ENCODE measurements at regions of chr16 and their contacts with region 1.

Region 1: GRCh38 chr16:29745853-29746345 is at the start of gene C16orf54:
- DNase-seq: peak; percentile 98 to 99 (median 98)
- H3K4me3 ChIP-seq: peak within 1 kb of the TSS; percentile 67 to 93
- H3K4me3 Mint-ChIP-seq: peak within 1 kb of the TSS; percentile 96 to 100 (median 99)
- H3K27ac ChIP-seq: peak within 1 kb of the TSS; percentile 94
- H3K27ac Mint-ChIP-seq: peak within 1 kb of the TSS; percentile 98 to 100 (median 100)
- H3K4me1 ChIP-seq: peaks cover 78% of the 10 kb centered on the region
- H3K4me1 Mint-ChIP-seq: peaks cover 39 to 79% (median 54%) of the 10 kb centered on the region in 4 donors
- H3K27me3 ChIP-seq: no peaks in the 10 kb centered on the region
- H3K27me3 Mint-ChIP-seq: peaks cover 0 to 2% of the 10 kb centered on the region in 2 donors
- total RNA-seq, gene C16orf54: 139 to 143 TPM

Region 2: GRCh38 chr16:28846933-28847273 is 899.0 kb before region 1 on chr16:
- CTCF ChIA-PET with region 1: no interaction called
- POLR2A ChIA-PET with region 1: no interaction called
- intact Hi-C with region 1: no loop called
- DNase-seq: no peak
- H3K4me3 ChIP-seq: peak overlapping the region; percentile 86 to 93
- H3K4me3 Mint-ChIP-seq: peak overlapping the region; percentile 92 to 100 (median 94)
- H3K27ac ChIP-seq: peak overlapping the region; percentile 87
- H3K27ac Mint-ChIP-seq: peak overlapping the region; percentile 95 to 99 (median 97)
- H3K4me1 ChIP-seq: peaks cover 22% of the 10 kb centered on the region
- H3K4me1 Mint-ChIP-seq: peaks cover 18 to 35% (median 25%) of the 10 kb centered on the region in 4 donors
- H3K27me3 ChIP-seq: no peaks in the 10 kb centered on the region
- H3K27me3 Mint-ChIP-seq: no peaks in the 10 kb centered on the region

Region 3: GRCh38 chr16:29710227-29711219 is 35.4 kb before region 1 on chr16:
- CTCF ChIA-PET with region 1: interaction called, 3 read pairs
- POLR2A ChIA-PET with region 1: interaction called, 12 read pairs
- intact Hi-C with region 1: loop called (anchors 1 kb)
- DNase-seq: peak; percentile 64 to 73 (median 69)
- H3K4me3 ChIP-seq: no peak overlapping the region
- H3K4me3 Mint-ChIP-seq: peak overlapping the region in 1 of 8 donors; percentile 12
- H3K27ac ChIP-seq: no peak overlapping the region
- H3K27ac Mint-ChIP-seq: peak overlapping the region in 6 of 7 donors; percentile 8 to 95 (median 89)
- H3K4me1 ChIP-seq: peaks cover 10% of the 10 kb centered on the region
- H3K4me1 Mint-ChIP-seq: peaks cover 6 to 25% (median 12%) of the 10 kb centered on the region in 4 donors
- H3K27me3 ChIP-seq: no peaks in the 10 kb centered on the region
- H3K27me3 Mint-ChIP-seq: no peaks in the 10 kb centered on the region

Region 4: DNA sequence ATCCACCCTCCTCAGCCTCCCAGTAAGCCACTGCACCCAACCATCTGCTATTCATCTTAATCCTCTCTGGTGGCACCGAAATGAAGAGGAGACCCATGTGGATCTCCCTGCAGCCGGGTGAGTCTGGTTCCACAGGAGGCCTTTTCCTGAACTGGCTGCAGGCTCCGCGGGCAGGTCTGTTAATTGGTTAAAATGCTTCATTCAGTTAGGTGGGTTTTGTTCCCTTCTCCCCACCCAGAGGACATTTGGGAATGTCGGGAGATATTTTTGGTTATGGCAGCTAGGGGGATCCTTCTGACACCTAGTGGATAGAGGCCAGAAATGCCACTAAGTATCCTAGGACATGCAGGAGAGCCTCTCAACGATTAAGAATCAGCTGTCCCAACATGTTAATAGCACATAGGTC is 16.8 kb before region 1 on chr16:
- CTCF ChIA-PET with region 1: interaction called, 7 read pairs
- POLR2A ChIA-PET with region 1: interaction called, 91 read pairs
- intact Hi-C with region 1: no loop called
- DNase-seq: no peak
- H3K4me3 ChIP-seq: no peak overlapping the region
- H3K4me3 Mint-ChIP-seq: peak overlapping the region in 1 of 8 donors; percentile 20
- H3K27ac ChIP-seq: no peak overlapping the region
- H3K27ac Mint-ChIP-seq: peak overlapping the region in 3 of 7 donors; percentile 24 to 66 (median 36)
- H3K4me1 ChIP-seq: peaks cover 14% of the 10 kb centered on the region
- H3K4me1 Mint-ChIP-seq: peaks cover 17 to 32% (median 21%) of the 10 kb centered on the region in 4 donors
- H3K27me3 ChIP-seq: no peaks in the 10 kb centered on the region
- H3K27me3 Mint-ChIP-seq: no peaks in the 10 kb centered on the region

Region 5: DNA sequence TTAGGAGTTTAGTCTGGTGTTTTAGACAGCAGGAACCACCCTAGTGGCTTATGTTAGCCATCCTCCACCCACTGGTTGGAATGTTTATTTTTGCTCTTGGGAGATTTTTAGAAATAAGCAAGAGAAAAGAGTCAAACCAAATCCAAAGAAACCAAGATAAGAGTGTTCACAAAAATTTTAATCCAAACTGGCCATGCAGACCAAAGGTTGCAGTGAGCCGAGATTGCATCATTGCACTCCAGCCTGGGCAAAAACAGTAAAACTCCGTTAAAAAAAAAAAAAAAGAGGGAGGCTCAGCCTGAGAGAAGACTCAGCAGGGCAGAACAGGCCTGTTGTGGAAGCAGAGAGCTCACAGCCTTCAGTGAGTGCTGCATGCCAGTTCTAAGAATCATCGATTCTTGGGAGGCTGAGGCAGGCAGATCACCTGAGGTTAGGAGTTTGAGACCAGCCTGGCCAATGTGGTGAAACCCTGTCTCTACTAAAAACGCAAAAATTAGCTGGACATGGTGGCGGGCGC is 12.1 kb after region 1 on chr16:
- CTCF ChIA-PET with region 1: interaction called, 9 read pairs
- POLR2A ChIA-PET with region 1: interaction called, 41 read pairs
- intact Hi-C with region 1: no loop called
- DNase-seq: no peak
- H3K4me3 ChIP-seq: no peak overlapping the region
- H3K4me3 Mint-ChIP-seq: no peak overlapping the region
- H3K27ac ChIP-seq: no peak overlapping the region
- H3K27ac Mint-ChIP-seq: peak overlapping the region in 3 of 7 donors; percentile 6 to 75 (median 46)
- H3K4me1 ChIP-seq: peaks cover 23% of the 10 kb centered on the region
- H3K4me1 Mint-ChIP-seq: peaks cover 19 to 43% (median 27%) of the 10 kb centered on the region in 4 donors
- H3K27me3 ChIP-seq: no peaks in the 10 kb centered on the region
- H3K27me3 Mint-ChIP-seq: no peaks in the 10 kb centered on the region

Region 6: GRCh38 chr16:29815793-29816693 is 70.1 kb after region 1 on chr16 and contains the start of gene PAGR1:
- CTCF ChIA-PET with region 1: interaction called, 3 read pairs
- POLR2A ChIA-PET with region 1: interaction called, 64 read pairs
- intact Hi-C with region 1: loop called (anchors 2 kb)
- DNase-seq: peak; percentile 99 to 100 (median 99)
- H3K4me3 ChIP-seq: peak within 1 kb of the TSS; percentile 91 to 95
- H3K4me3 Mint-ChIP-seq: peak within 1 kb of the TSS; percentile 95 to 99 (median 98)
- H3K27ac ChIP-seq: peak within 1 kb of the TSS; percentile 77
- H3K27ac Mint-ChIP-seq: peak within 1 kb of the TSS; percentile 94 to 100 (median 98)
- H3K4me1 ChIP-seq: peaks cover 66% of the 10 kb centered on the region
- H3K4me1 Mint-ChIP-seq: peaks cover 30 to 87% (median 56%) of the 10 kb centered on the region in 4 donors
- H3K27me3 ChIP-seq: no peaks in the 10 kb centered on the region
- H3K27me3 Mint-ChIP-seq: peaks cover 0 to 2% of the 10 kb centered on the region in 2 donors
- total RNA-seq, gene PAGR1: 43.7 to 44.9 TPM

Region 7: GRCh38 chr16:29883987-29884386 is 138.1 kb after region 1 on chr16:
- CTCF ChIA-PET with region 1: no interaction called
- POLR2A ChIA-PET with region 1: no interaction called
- intact Hi-C with region 1: no loop called
- DNase-seq: no peak
- H3K4me3 ChIP-seq: no peak overlapping the region
- H3K4me3 Mint-ChIP-seq: no peak overlapping the region
- H3K27ac ChIP-seq: no peak overlapping the region
- H3K27ac Mint-ChIP-seq: no peak overlapping the region
- H3K4me1 ChIP-seq: no peaks in the 10 kb centered on the region
- H3K4me1 Mint-ChIP-seq: peaks cover 0 to 1% (median 0%) of the 10 kb centered on the region in 4 donors
- H3K27me3 ChIP-seq: no peaks in the 10 kb centered on the region
- H3K27me3 Mint-ChIP-seq: peaks cover 7 to 18% of the 10 kb centered on the region in 2 donors

Measured in CD4-positive, alpha-beta memory T cell (primary cell).